HEK293 (cell line): ENCODE measurements at regions of chr17 and their contacts with region 1.

Region 1: DNA sequence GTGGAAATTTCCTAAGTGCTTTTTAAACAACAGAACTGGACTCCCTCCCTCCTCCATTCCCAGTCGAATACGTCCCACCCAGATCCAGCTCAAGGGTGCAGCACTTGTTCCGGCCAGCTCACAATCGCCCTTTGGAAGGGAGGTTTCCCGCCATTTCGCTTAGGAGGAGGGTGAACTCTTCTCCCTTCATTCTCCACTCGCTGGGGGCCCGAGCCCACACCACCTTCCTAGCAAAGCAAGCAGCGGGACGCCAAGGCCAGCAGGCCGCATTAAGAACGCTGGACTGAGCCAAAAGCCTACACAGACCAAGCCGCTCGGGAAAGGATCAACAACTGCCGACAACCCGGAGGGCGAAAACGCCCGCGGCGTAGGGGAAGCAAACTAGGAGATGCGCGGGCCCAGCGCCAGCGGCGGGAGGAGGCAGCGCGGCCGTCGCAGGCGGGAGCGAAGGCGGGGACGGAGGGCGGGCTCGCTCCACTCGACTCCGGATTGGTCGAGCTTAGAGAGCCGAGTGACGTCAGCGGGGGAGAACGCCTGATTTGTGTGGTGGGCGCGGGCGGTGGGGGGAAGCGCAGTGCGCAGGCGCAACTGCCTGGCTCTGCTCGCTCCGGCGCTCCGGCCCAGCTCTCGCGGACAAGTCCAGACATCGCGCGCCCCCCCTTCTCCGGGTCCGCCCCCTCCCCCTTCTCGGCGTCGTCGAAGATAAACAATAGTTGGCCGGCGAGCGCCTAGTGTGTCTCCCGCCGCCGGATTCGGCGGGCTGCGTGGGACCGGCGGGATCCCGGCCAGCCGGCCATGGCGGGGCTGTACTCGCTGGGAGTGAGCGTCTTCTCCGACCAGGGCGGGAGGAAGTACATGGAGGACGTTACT is at the start of gene PPM1D:
- H3K4me3 ChIP-seq: peak within 1 kb of the TSS; percentile 94
- H3K27ac ChIP-seq: peak within 1 kb of the TSS; percentile 98
- H3K4me1 ChIP-seq: peaks cover 25% of the 10 kb centered on the region
- CTCF ChIP-seq: peak; percentile 66

Region 2: GRCh38 chr17:60392042-60392844 is 207.6 kb before region 1 on chr17 and contains the start of gene USP32:
- CTCF ChIA-PET with region 1: no interaction called
- POLR2A ChIA-PET with region 1: interaction called, 14 read pairs
- H3K4me3 ChIP-seq: peak within 1 kb of the TSS; percentile 88
- H3K27ac ChIP-seq: peak within 1 kb of the TSS; percentile 91
- H3K4me1 ChIP-seq: peaks cover 8% of the 10 kb centered on the region
- CTCF ChIP-seq: peak; percentile 84

Region 3: DNA sequence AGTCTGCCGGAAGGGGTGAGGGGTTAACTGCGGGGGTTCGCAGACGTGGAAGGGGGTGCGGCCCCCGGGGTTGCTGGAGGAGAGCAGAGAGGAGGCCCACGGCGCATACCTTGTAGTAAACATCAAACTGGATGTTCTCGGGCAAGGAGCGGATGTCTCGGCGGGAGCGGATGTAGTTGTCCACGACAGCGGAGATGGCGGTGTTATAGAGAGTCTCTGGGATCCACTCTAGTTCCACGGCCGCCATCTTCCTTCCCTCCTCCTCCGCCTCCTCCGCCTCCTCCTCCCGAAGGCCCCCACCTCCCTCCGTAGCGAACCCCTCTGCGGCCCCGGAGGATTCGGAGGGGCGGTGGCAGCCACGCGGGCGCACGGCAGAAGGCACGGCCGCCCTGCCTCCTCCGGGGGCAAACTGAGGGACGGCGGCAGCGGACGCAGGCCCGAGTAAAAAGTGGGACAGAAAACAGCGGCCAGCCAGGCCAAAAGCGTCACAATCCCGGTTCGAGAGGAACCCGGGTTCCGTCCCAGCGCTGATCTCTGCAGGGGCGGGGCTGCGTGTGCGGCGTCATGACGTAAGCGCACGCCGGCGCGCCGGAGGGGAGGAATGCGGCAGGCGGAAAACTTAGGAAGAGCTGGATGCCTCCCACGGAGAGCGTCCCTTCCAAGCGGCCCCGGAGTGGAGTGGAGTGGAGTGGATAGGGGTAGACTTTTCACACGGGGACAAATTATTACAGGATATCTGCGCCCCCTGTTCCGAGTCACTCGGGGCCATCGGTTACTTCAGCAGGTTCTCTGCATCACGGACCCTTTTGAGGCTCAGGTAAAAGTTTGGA is 74.0 kb before region 1 on chr17 and contains the start of gene APPBP2:
- CTCF ChIA-PET with region 1: no interaction called
- POLR2A ChIA-PET with region 1: interaction called, 31 read pairs
- H3K4me3 ChIP-seq: peak within 1 kb of the TSS; percentile 98
- H3K27ac ChIP-seq: peak within 1 kb of the TSS; percentile 98
- H3K4me1 ChIP-seq: no peaks in the 10 kb centered on the region
- CTCF ChIP-seq: no peak

Region 4: DNA sequence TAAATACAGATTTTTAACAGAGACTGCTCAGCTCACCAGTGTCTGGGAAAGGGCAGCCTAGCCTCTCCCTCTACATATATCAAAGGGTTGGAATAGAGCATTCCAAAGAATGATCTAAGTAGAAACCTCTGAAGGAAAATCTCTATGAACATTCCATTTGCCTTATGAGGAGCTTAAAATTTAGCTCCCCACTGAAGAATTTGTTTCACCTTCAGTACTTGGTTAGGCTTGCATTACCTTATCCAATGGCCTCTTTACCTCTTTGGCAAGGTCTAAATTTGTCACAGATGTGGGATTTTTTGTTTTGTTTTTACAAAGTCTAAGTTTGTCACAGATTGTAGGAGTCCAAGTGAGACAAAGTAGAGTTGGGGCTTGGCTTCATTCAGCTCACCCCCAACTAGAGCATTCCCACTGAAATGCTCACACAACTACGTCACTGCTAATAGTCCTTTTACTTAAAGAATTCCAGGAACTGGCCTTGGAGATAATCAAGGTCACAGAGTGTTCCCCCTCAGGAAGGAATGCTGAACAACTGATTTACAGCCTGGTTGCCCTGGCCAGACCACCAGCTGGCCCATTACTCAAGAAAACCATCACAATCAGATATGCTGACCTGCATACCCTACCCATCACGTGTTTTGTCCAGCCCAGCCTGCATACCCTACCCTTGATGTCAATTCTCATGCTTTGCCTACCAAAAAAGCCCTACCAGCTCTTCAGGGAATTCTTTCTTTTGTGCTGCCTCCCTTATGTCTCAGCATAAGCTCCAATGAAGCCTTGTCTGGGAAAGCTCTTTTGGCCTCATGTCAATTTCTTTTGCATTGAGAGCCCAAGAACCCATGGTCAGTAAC is 26.4 kb before region 1 on chr17:
- CTCF ChIA-PET with region 1: interaction called, 7 read pairs
- POLR2A ChIA-PET with region 1: interaction called, 10 read pairs
- H3K4me3 ChIP-seq: no peak overlapping the region
- H3K27ac ChIP-seq: no peak overlapping the region
- H3K4me1 ChIP-seq: no peaks in the 10 kb centered on the region
- CTCF ChIP-seq: no peak

Region 5: GRCh38 chr17:60582636-60583407 is 17.0 kb before region 1 on chr17:
- CTCF ChIA-PET with region 1: interaction called, 6 read pairs
- POLR2A ChIA-PET with region 1: interaction called, 13 read pairs
- H3K4me3 ChIP-seq: no peak overlapping the region
- H3K27ac ChIP-seq: no peak overlapping the region
- H3K4me1 ChIP-seq: no peaks in the 10 kb centered on the region
- CTCF ChIP-seq: no peak

Region 6: DNA sequence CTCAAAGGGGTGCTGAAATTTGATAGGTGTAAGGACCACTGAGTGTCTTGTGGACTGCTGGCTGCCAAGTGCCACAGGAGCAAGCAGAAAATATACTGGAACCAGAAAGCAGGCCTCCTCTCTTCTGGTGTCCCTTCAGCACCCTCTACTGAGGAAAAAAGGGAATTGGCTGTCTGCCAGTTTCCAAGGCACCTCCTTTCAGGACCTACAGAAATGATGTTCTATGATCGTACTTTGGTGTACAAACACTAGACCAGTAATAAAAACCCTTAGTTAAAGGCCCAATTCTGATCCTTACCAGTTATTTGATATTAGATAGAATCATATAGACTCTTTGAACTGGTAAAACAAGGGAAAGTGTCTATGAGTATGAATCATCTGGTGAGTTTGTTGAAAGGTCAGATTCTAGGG is 42.0 kb after region 1 on chr17:
- CTCF ChIA-PET with region 1: interaction called, 51 read pairs
- POLR2A ChIA-PET with region 1: interaction called, 8 read pairs
- H3K4me3 ChIP-seq: no peak overlapping the region
- H3K27ac ChIP-seq: no peak overlapping the region
- H3K4me1 ChIP-seq: peaks cover 12% of the 10 kb centered on the region
- CTCF ChIP-seq: peak; percentile 68; the same call in 1 of the 2 replicates

Region 7: DNA sequence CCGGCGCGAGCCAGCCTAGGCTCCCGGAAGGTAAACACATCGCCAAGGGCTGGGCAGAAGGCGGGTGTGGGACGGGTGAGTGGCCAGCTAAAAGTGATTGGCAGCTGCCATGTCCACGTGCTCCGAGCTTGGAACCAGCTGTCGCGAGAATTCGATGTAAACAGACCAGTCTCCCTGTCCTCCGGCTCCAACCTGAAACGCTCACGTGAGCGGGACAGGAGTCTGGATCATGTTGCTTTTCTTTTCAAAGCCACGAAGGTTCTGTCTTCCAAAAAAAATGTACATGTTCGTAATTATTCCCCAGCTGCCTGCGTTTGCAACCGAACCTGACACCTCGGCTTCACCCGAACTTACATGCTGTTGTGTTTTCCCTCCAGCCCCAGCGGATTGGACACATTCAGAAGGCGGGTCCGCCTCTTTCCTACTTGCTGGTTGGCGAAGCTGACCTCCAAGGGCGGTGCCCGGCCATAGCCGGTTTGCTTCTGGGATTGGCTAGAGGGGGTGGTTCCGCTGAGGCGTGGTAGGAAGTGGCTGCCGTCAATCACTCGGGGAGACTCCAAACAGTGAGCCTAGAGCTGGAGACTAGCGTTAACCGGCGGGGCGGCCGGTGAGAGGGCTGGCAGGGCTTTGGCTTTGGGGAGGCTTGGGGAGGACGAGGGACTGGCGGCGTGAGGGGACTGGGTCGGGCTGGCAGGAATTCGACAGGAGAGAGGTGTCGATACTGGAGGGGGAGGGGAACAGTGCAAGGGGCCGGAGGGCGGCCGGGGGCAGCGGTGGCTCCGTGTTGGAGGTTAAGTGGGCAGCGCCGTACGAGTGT is 77.7 kb after region 1 on chr17 and contains the start of gene BCAS3:
- CTCF ChIA-PET with region 1: interaction called, 5 read pairs
- POLR2A ChIA-PET with region 1: interaction called, 30 read pairs
- H3K4me3 ChIP-seq: peak within 1 kb of the TSS; percentile 71
- H3K27ac ChIP-seq: peak within 1 kb of the TSS; percentile 34
- H3K4me1 ChIP-seq: peaks cover 3% of the 10 kb centered on the region; the same call in 1 of the 2 replicates
- CTCF ChIP-seq: no peak